ENCODE measurements at regions of chr6 and their contacts with region 1.

Region 1: GRCh38 chr6:147724454-147724853 is 216.0 kb downstream of the SAMD5 start:
- DNase-seq: no peak
- ATAC-seq: no peak
- H3K4me3 ChIP-seq: no peak overlapping the region
- H3K27ac ChIP-seq: no peak overlapping the region
- H3K4me1 ChIP-seq: no peaks in the 10 kb centered on the region
- H3K27me3 ChIP-seq: no peaks in the 10 kb centered on the region
- CTCF ChIP-seq: no peak
- POLR2A ChIP-seq: no peak

Region 2: GRCh38 chr6:147677647-147678046 is 46.8 kb before region 1 on chr6:
- in situ Hi-C with region 1: no loop called
- intact Hi-C with region 1: no loop called
- DNase-seq: no peak
- ATAC-seq: no peak
- H3K4me3 ChIP-seq: no peak overlapping the region
- H3K27ac ChIP-seq: no peak overlapping the region
- H3K4me1 ChIP-seq: no peaks in the 10 kb centered on the region
- H3K27me3 ChIP-seq: no peaks in the 10 kb centered on the region
- CTCF ChIP-seq: no peak
- POLR2A ChIP-seq: no peak

Region 3: GRCh38 chr6:147709396-147710272 is 14.8 kb before region 1 on chr6:
- in situ Hi-C with region 1: no loop called
- intact Hi-C with region 1: no loop called
- DNase-seq: no peak
- ATAC-seq: no peak
- H3K4me3 ChIP-seq: no peak overlapping the region
- H3K27ac ChIP-seq: no peak overlapping the region
- H3K4me1 ChIP-seq: no peaks in the 10 kb centered on the region
- H3K27me3 ChIP-seq: no peaks in the 10 kb centered on the region
- CTCF ChIP-seq: no peak
- POLR2A ChIP-seq: no peak

Region 4: DNA sequence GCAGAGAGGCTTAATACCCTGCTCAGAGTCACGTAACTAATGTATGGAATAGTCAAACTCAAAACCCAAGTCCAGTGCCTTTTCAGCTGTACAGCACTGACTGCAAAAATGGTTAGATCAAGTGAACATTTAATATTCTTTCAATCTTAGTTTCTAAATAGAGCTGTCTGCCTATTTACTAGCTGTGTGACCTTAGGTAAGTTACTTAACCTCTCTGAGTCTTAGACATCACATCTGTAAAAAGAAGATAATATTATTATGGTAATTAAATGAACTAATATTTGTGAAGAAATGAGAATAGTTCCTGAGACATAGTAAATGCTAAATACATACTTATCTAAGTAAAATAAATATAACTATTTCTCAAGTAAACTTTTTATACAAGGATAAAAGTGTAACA is 19.6 kb after region 1 on chr6:
- in situ Hi-C with region 1: no loop called
- intact Hi-C with region 1: loop called (anchors 1 kb)
- DNase-seq: no peak
- ATAC-seq: no peak
- H3K4me3 ChIP-seq: no peak overlapping the region
- H3K27ac ChIP-seq: no peak overlapping the region
- H3K4me1 ChIP-seq: no peaks in the 10 kb centered on the region
- H3K27me3 ChIP-seq: no peaks in the 10 kb centered on the region
- CTCF ChIP-seq: no peak
- POLR2A ChIP-seq: no peak

Measured in gastrocnemius medialis (tissue), 4 donors.